Activated CD4-positive, alpha-beta T cell treated with anti-CD3 and anti-CD28 coated beads for 36 hours (primary cell): ENCODE measurements at regions of chr2 and their contacts with region 1.

Region 1: GRCh38 chr2:11124503-11125068 is 30.7 kb upstream of the SLC66A3 start:
- DNase-seq: peak; percentile 88
- ATAC-seq: peak; percentile 89
- H3K4me3 Mint-ChIP-seq: no peak overlapping the region
- H3K27ac Mint-ChIP-seq: no peak overlapping the region
- H3K4me1 Mint-ChIP-seq: peaks cover 3% of the 10 kb centered on the region
- H3K27me3 Mint-ChIP-seq: no peaks in the 10 kb centered on the region

Region 2: GRCh38 chr2:11073251-11073650 is 51.3 kb before region 1 on chr2:
- CTCF ChIA-PET with region 1: interaction called, 9 read pairs
- POLR2A ChIA-PET with region 1: no interaction called
- intact Hi-C with region 1: loop called (anchors 1 to 5 kb)
- DNase-seq: peak; percentile 65
- ATAC-seq: peak; percentile 53
- H3K4me3 Mint-ChIP-seq: no peak overlapping the region
- H3K27ac Mint-ChIP-seq: no peak overlapping the region
- H3K4me1 Mint-ChIP-seq: peaks cover 11% of the 10 kb centered on the region
- H3K27me3 Mint-ChIP-seq: peaks cover 24% of the 10 kb centered on the region

Region 3: GRCh38 chr2:12057436-12058166 is 933.0 kb after region 1 on chr2:
- CTCF ChIA-PET with region 1: no interaction called
- POLR2A ChIA-PET with region 1: no interaction called
- intact Hi-C with region 1: no loop called
- DNase-seq: peak; percentile 16
- ATAC-seq: peak; percentile 33
- H3K4me3 Mint-ChIP-seq: no peak overlapping the region
- H3K27ac Mint-ChIP-seq: no peak overlapping the region
- H3K4me1 Mint-ChIP-seq: peaks cover 10% of the 10 kb centered on the region
- H3K27me3 Mint-ChIP-seq: peaks cover 2% of the 10 kb centered on the region